SK-N-SH (cell line): ENCODE measurements at regions of chr9 and their contacts with region 1.

Region 1: DNA sequence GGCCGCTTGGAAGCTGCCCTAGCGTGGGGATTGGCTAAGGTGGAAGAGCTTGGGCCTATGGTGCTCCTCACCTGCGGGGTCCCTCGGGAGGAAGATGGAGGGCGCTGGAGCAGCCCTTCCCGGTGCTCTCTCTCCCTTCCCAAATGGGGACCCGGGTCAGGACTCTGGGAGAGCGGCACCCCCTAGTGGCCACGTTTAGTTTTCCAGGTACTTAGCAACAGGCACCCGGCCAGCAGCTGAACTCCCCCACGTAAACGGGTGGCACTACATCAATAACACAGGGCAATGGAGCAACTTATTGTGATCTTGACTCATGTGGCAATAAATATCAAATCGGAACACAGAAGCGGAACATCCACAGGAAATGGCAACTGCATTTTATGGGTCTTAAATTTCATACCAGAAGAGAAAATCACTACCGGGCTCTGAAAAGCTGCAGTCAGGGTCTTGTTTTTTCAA is 316.6 kb downstream of the AGTPBP1 start:
- DNase-seq: peak; percentile 77
- H3K4me3 ChIP-seq: no peak overlapping the region; a peak in 1 of 4 replicates
- H3K27ac ChIP-seq: no peak overlapping the region
- H3K4me1 ChIP-seq: peaks cover 0 to 11% of the 10 kb centered on the region in 2 experiments; a peak in 2 of 4 replicates
- H3K27me3 ChIP-seq: no peaks in the 10 kb centered on the region
- CTCF ChIP-seq: peak; percentile 73
- EP300 ChIP-seq: no peak
- RAD21 ChIP-seq: peak; percentile 82

Region 2: GRCh38 chr9:84397151-84397728 is 1027.9 kb before region 1 on chr9:
- CTCF ChIA-PET with region 1: interaction called, 22 read pairs
- POLR2A ChIA-PET with region 1: no interaction called
- DNase-seq: peak; percentile 82
- H3K4me3 ChIP-seq: peak overlapping the region in 1 of 2 experiments; percentile 13; a peak in 1 of 4 replicates
- H3K27ac ChIP-seq: no peak overlapping the region
- H3K4me1 ChIP-seq: peaks cover 0 to 3% of the 10 kb centered on the region in 2 experiments; a peak in 1 of 4 replicates
- H3K27me3 ChIP-seq: no peaks in the 10 kb centered on the region
- CTCF ChIP-seq: peak; percentile 88
- EP300 ChIP-seq: no peak
- RAD21 ChIP-seq: peak; percentile 98

Region 3: DNA sequence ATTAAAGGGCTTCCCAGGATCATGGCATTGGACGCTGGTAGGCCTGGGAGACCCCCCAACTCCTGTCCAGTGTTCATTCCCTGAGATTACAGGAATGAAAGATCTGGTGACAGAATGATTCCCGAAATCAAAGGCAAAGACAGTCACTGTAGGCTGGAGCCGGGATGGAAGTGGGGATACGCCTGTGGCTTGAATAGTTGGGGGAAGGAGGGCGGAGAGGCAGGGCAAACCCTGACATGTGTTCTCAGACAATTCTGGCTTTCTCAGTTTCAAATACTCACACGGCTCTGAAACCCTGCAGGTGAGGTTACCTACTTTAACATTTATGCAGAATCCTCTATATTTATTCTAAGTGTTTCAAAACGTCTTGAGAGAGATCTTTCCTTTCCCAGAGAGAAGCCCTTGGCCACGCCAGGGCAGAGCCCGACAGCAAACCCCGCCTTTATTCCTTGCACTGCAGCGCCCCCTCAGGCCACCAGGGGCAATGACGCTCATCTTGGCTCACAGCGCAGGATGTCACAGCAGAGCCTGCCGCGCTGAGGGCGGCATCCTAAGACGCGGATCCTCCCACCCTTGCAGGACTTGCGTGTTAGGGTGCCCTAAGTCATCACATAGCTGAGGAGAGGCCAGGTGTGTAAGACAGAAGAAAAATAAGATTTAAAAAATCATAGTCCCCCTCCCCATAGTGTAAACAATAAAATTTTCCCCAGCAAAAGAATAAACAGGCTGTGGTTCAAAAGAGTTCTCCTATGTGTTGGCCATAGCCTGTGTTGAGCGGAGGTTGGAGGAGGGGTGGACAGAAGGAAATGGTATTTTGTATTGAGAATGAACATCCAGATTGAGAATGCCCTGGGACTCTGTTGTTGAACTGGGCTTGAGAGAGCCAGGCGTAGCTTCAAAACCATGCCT is 471.1 kb before region 1 on chr9:
- CTCF ChIA-PET with region 1: no interaction called
- POLR2A ChIA-PET with region 1: no interaction called
- DNase-seq: peak; percentile 85
- H3K4me3 ChIP-seq: peak overlapping the region in 1 of 2 experiments; percentile 23; a peak in 1 of 4 replicates
- H3K27ac ChIP-seq: no peak overlapping the region
- H3K4me1 ChIP-seq: no peaks in the 10 kb centered on the region; a peak in 1 of 4 replicates
- H3K27me3 ChIP-seq: no peaks in the 10 kb centered on the region
- CTCF ChIP-seq: peak; percentile 93
- EP300 ChIP-seq: no peak
- RAD21 ChIP-seq: peak; percentile 86

Region 4: DNA sequence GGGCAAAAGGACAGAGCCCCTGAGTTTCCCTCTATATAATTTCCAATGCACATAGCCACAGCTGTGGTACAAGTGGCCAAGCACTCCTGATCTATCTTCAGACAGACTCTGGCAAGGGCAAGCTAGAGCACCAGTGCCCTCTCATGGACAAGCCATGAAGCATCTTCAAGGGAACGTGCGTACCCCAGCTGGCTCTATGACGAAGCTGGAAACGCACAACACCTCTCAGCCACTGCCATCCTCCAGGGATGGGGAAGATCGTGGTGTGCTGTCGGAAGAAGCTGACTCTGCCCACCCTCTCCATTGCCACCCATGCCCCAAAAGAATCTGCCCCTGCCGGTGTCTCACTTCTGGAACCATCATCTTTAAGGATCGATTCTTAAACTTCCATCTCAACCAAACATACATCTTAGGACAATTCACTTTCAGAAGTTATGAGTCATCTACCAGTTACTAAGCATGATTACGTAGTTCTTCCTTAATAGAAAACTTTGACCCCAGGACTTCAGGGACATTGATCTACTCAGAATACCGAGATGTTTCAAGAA is 166.3 kb before region 1 on chr9:
- CTCF ChIA-PET with region 1: interaction called, 15 read pairs
- POLR2A ChIA-PET with region 1: no interaction called
- DNase-seq: peak; percentile 69
- H3K4me3 ChIP-seq: no peak overlapping the region; a peak in 1 of 4 replicates
- H3K27ac ChIP-seq: no peak overlapping the region
- H3K4me1 ChIP-seq: peaks cover 0 to 5% of the 10 kb centered on the region in 2 experiments; a peak in 2 of 4 replicates
- H3K27me3 ChIP-seq: no peaks in the 10 kb centered on the region
- CTCF ChIP-seq: peak; percentile 75
- EP300 ChIP-seq: no peak
- RAD21 ChIP-seq: peak; percentile 97

Region 5: GRCh38 chr9:85392260-85392659 is 32.9 kb before region 1 on chr9:
- CTCF ChIA-PET with region 1: interaction called, 11 read pairs
- POLR2A ChIA-PET with region 1: no interaction called
- DNase-seq: no peak
- H3K4me3 ChIP-seq: no peak overlapping the region
- H3K27ac ChIP-seq: no peak overlapping the region
- H3K4me1 ChIP-seq: no peaks in the 10 kb centered on the region; a peak in 1 of 4 replicates
- H3K27me3 ChIP-seq: no peaks in the 10 kb centered on the region
- CTCF ChIP-seq: no peak
- EP300 ChIP-seq: no peak
- RAD21 ChIP-seq: no peak

Region 6: GRCh38 chr9:85439788-85440187 is 14.6 kb after region 1 on chr9:
- CTCF ChIA-PET with region 1: interaction called, 12 read pairs
- POLR2A ChIA-PET with region 1: no interaction called
- DNase-seq: no peak
- H3K4me3 ChIP-seq: no peak overlapping the region
- H3K27ac ChIP-seq: no peak overlapping the region
- H3K4me1 ChIP-seq: peaks cover 0 to 9% of the 10 kb centered on the region in 2 experiments; a peak in 1 of 4 replicates
- H3K27me3 ChIP-seq: no peaks in the 10 kb centered on the region
- CTCF ChIP-seq: no peak
- EP300 ChIP-seq: no peak
- RAD21 ChIP-seq: no peak

Region 7: GRCh38 chr9:85466834-85467233 is 41.7 kb after region 1 on chr9:
- CTCF ChIA-PET with region 1: no interaction called
- POLR2A ChIA-PET with region 1: no interaction called
- DNase-seq: no peak
- H3K4me3 ChIP-seq: no peak overlapping the region
- H3K27ac ChIP-seq: no peak overlapping the region
- H3K4me1 ChIP-seq: no peaks in the 10 kb centered on the region
- H3K27me3 ChIP-seq: no peaks in the 10 kb centered on the region
- CTCF ChIP-seq: no peak
- EP300 ChIP-seq: no peak
- RAD21 ChIP-seq: no peak

Region 8: DNA sequence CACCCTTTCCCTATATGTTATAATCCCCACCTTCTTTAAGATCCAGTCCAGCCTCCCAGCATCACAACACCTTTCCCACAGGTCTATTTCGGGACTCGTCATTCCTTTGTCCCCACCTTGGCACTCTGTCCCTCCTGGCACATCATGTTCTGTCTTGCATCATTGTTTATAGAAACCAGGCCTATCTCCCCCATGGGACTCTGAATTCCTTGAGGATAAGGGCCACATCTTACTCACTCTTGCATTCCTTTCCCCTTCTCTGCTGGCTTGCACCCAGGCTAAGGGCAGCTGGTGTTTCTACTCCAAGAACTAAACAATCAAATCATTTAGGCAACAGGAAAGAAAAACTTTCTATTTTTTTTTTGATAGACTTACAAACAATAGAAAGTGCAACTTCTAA is 110.9 kb after region 1 on chr9:
- CTCF ChIA-PET with region 1: no interaction called
- POLR2A ChIA-PET with region 1: no interaction called
- DNase-seq: no peak
- H3K4me3 ChIP-seq: no peak overlapping the region
- H3K27ac ChIP-seq: no peak overlapping the region
- H3K4me1 ChIP-seq: no peaks in the 10 kb centered on the region
- H3K27me3 ChIP-seq: no peaks in the 10 kb centered on the region
- CTCF ChIP-seq: no peak
- EP300 ChIP-seq: no peak
- RAD21 ChIP-seq: no peak

Region 9: GRCh38 chr9:85559526-85559925 is 134.3 kb after region 1 on chr9:
- CTCF ChIA-PET with region 1: no interaction called
- POLR2A ChIA-PET with region 1: no interaction called
- DNase-seq: no peak
- H3K4me3 ChIP-seq: no peak overlapping the region
- H3K27ac ChIP-seq: no peak overlapping the region
- H3K4me1 ChIP-seq: peaks cover 0 to 4% of the 10 kb centered on the region in 2 experiments; a peak in 1 of 4 replicates
- H3K27me3 ChIP-seq: no peaks in the 10 kb centered on the region
- CTCF ChIP-seq: no peak
- EP300 ChIP-seq: no peak
- RAD21 ChIP-seq: no peak